ENCODE measurements at regions of chr2 and their contacts with region 1.

Region 1: DNA sequence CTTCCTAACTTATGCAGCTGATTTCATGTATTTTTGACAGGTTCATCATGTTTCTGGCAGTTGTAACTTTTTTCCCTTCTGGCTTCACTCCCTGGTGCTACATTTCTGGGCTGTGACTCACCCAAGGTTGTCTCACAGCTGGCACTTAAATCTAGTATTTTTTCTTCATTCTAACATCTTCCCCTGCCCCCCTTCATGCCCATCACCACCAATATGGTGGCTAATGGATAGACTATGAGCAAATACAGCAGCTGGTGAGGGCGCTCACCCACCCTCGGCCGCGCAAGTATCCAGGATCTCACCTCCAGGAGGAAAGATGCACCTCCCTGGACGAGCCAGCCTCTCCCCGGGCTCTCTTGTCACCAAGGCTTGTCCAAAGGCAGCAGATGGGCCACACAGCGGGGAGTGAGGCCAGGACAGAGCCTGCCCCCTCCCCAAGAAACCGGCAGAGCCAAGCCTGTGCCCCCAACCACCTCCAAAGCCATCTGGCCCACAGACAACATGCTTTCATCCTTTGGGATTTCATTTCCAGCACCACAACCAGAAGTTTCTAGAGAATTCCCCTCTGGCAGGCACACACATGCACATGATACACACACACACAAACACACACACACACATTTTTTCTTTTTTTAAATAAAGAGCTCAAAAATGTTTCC is 39.1 kb downstream of the ATOH8 start:
- DNase-seq: peak in 5 of 42 donors; percentile 11 to 55 (median 17)

Region 2: GRCh38 chr2:85750587-85751575 is 42.0 kb before region 1 on chr2:
- intact Hi-C with region 1: loop called (anchors 5 kb)
- DNase-seq: peak; percentile 71 to 95 (median 87)